ENCODE measurements at regions of chr17 and their contacts with region 1.

Region 1: DNA sequence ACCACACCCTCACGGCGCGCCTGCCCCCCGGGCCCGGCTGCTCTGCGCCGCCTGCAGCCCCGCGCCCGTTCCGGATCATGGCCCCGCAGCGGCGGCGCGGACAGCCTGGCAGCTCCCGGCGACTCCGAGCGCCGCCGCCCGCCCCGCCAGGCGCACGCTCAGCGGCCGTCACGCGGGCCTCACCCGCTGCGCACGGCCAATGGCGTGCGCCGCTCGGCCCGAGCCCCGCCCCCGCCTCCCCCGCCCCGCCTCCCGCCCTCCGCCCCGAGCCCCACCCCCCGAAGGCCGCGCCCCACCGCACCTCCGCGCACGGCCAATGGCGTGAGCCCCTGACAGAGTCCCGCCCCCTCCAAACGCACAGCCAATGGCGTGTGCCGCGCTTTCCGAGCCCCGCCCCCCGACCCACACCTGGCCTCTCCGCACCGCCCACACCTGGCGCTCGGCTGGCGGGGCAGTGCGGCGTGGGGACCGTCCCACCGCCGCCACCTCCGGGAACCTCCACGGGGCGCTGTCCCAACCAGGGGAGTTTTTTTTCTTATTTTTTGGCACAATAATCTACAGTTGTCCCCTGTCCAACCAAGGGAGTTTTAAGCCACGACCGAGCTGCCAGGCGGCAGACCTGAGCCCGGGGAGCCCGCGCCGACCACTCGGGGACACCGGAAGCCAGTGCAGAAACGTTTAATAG is at the start of gene PCYT2:
- DNase-seq: peak; percentile 89 to 97 (median 93)
- ATAC-seq: peak; percentile 97
- H3K4me3 ChIP-seq: peak within 1 kb of the TSS; percentile 72
- H3K4me3 Mint-ChIP-seq: peak within 1 kb of the TSS; percentile 92
- H3K27ac ChIP-seq: peak within 1 kb of the TSS in 1 of 2 donors; percentile 29
- H3K27ac Mint-ChIP-seq: peak within 1 kb of the TSS; percentile 73
- H3K4me1 ChIP-seq: peaks cover 33% of the 10 kb centered on the region
- H3K4me1 Mint-ChIP-seq: peaks cover 11% of the 10 kb centered on the region
- H3K27me3 ChIP-seq: no peaks in the 10 kb centered on the region
- H3K27me3 Mint-ChIP-seq: no peaks in the 10 kb centered on the region
- CTCF ChIP-seq: no peak
- total RNA-seq, gene PCYT2: 18.7 to 18.9 TPM

Region 2: DNA sequence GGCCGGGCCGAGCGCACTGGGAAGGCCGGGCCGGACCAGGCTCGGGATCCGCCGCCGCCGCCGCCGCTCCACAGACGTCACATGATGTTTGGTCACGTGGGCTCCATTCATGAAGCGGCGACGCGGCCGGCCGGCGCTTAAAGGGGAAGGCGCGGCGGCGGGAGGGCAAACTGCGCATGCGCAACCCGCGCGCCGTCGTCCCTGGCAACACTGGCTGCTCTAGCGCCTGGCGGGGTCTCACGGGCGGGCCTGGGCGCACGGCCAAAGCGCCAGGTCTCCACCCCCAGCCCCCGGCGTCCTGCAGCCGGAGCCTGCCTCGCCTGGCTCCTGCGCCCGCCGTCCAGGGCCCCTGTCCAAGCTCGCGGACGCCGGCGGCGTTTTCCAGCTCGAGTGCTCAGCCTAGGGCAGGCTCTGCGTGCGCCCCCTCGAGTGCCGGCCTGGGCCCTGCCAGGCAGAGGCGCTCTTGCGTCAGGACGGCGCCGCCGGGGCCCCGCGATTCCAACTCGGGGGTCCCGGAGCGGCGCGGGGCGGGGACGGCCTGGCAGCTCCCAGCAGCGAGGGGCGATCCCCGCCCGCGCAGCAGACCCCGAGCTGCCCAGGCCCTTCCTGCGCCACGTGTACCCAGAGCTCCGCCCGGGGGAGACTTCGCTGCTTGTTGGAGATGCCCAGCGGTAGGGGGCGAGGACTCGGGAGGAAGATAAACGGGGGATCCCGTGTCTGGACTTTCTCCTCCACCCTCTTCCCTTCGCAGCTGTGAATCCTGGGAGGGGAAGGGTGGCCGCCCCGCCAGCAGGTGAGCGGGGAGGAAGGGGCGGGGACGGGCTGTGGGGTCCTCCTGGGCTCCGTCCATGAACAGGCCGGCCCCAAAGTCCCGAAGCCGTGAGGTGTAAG is 16.5 kb after region 1 on chr17 and contains the start of gene MAFG:
- CTCF ChIA-PET with region 1: interaction called, 3 read pairs
- POLR2A ChIA-PET with region 1: interaction called, 26 read pairs
- intact Hi-C with region 1: loop called in 1 of 2 experiments (anchors 2 kb)
- DNase-seq: peak; percentile 78 to 97 (median 87)
- ATAC-seq: peak; percentile 58
- H3K4me3 ChIP-seq: peak within 1 kb of the TSS; percentile 61
- H3K4me3 Mint-ChIP-seq: peak within 1 kb of the TSS; percentile 88
- H3K27ac ChIP-seq: peak within 1 kb of the TSS; percentile 54 to 65
- H3K27ac Mint-ChIP-seq: peak within 1 kb of the TSS; percentile 88
- H3K4me1 ChIP-seq: peaks cover 51% of the 10 kb centered on the region
- H3K4me1 Mint-ChIP-seq: peaks cover 20% of the 10 kb centered on the region
- H3K27me3 ChIP-seq: peaks cover 19% of the 10 kb centered on the region in 2 experiments
- H3K27me3 Mint-ChIP-seq: peaks cover 16% of the 10 kb centered on the region
- CTCF ChIP-seq: no peak
- total RNA-seq, gene MAFG: 10.8 to 13.3 TPM

Region 3: GRCh38 chr17:82267575-82268379 is 356.4 kb after region 1 on chr17:
- CTCF ChIA-PET with region 1: no interaction called
- POLR2A ChIA-PET with region 1: no interaction called
- intact Hi-C with region 1: no loop called
- DNase-seq: peak in 9 of 14 experiments; percentile 19 to 70 (median 33)
- ATAC-seq: peak; percentile 32
- H3K4me3 ChIP-seq: no peak overlapping the region
- H3K4me3 Mint-ChIP-seq: peak overlapping the region; percentile 67
- H3K27ac ChIP-seq: peak overlapping the region in 1 of 2 donors; percentile 29
- H3K27ac Mint-ChIP-seq: peak overlapping the region; percentile 85
- H3K4me1 ChIP-seq: peaks cover 71% of the 10 kb centered on the region
- H3K4me1 Mint-ChIP-seq: peaks cover 64% of the 10 kb centered on the region
- H3K27me3 ChIP-seq: no peaks in the 10 kb centered on the region
- H3K27me3 Mint-ChIP-seq: no peaks in the 10 kb centered on the region
- CTCF ChIP-seq: no peak